ENCODE measurements at regions of chrX and their contacts with region 1.

Region 1: DNA sequence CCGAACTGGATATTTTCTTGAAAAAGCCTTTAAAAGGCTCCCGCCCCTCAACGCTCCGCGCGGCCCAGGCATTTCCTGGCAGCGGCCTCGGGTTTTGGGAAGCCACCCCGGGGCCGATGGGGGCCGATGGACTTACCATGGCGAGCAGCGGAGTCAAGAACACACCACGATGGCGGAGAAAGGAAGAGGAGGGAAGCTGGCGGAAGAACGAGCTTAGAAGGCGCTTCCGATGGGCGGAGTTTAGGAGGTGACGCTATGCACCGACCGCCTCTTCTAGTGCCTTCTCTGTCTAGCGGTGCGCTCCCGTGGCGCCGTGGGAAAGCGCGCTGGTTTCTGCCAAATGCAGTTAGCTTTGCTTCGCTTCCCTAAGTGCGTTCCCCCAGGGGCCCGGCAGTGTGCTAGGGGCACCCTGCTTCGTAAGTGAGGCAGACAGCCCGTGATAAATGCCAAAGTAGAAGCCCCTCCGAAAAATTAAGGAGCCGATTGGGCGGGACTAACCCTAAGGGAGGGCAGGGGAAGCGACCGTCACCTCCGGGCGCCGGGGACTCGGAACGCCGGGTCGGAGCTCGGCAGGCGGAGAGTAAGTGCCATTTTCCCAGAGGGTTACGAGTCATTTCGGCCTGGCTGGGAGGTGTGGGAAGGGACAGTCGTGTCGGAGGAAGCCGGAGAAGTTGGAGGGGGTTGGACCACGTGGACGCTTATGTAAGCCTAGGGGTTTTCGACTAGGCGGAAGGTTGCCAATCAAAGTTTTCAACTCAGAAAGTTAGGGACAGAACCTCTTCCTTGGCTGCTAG is at the start of gene RPL39:
- DNase-seq: peak; percentile 85
- H3K4me3 Mint-ChIP-seq: peak within 1 kb of the TSS; percentile 93
- H3K27ac Mint-ChIP-seq: peak within 1 kb of the TSS; percentile 92
- H3K4me1 Mint-ChIP-seq: peaks cover 28% of the 10 kb centered on the region
- H3K27me3 Mint-ChIP-seq: no peaks in the 10 kb centered on the region
- total RNA-seq, gene RPL39: 2,056 to 2,070 TPM

Region 2: DNA sequence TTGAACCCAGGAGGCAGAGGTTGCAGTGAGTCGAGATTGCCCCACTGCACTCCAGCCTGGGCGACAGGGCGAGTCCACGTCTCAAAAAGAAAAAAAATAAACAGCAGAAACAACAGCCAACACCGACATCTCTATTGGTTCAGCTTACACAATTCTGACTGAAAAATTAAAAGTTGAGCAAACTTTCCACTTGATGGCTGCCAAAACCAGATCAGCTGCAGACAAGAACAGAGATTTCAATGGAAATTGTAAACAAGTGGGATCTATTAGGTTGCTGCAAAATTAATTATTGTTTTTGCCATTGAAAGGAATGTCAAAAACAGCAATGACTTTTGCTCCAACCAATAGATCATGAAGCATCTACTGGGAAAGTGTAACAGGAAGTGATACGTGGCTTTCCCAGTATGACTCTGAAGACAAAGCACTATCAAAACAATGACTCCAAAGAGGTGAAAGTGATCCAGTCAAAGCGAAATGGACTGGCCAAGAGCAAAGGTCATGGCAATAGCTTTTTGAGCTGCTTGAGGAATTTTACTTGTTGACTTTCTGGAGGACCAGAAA is 34.8 kb after region 1 on chrX:
- CTCF ChIA-PET with region 1: interaction called, 9 read pairs
- POLR2A ChIA-PET with region 1: interaction called, 26 read pairs
- DNase-seq: no peak
- H3K4me3 Mint-ChIP-seq: no peak overlapping the region
- H3K27ac Mint-ChIP-seq: no peak overlapping the region
- H3K4me1 Mint-ChIP-seq: peaks cover 20% of the 10 kb centered on the region
- H3K27me3 Mint-ChIP-seq: no peaks in the 10 kb centered on the region

Region 3: DNA sequence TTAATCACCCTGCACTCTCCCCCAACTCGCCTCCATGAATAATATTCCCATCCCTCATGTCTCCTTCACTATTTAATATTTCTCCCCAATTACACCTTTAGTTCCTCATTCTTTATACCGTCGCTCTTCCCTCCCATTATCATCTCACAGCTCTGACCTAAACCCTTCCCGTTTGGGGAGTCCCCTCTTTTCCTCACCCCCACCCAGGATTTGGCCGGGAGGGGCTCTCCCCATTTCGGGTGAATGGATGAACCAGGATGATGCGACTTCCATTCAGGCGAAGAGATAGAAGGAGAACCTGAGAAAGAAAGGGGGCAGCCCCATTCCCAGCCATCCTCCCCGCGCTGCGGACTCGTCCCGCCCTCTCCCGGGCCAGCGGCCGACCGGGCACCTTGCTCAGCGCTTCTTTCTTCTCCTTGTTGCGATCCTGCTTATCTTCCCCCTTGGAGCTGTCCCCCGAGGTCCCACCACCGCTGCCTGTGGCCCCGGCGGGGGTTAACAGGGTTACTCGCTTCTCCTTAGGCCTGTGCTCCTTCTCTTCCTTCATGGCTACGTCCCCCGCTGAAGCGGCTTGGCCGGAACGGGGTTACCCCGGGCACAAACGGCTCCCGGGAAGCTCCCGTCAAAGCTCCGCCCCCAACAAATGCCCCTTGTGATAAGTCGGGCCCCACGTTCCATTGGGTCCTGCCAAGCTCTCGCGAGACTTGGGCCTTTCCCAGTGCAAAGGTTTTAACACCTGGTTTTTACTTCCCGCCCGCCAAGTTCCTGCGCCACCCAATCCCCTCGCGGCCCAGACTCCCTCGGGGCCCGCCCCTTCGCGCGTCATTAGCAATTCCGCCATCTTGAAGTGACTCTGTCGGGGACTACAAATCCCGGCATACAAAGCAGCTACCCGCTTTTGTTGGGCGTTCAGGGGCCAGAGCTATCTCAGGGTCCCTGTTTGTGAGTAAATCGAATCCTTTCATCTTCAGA is 61.0 kb after region 1 on chrX and contains the start of gene UPF3B:
- CTCF ChIA-PET with region 1: interaction called, 13 read pairs
- POLR2A ChIA-PET with region 1: interaction called, 32 read pairs
- DNase-seq: peak; percentile 95
- H3K4me3 Mint-ChIP-seq: peak within 1 kb of the TSS; percentile 99
- H3K27ac Mint-ChIP-seq: peak within 1 kb of the TSS; percentile 91
- H3K4me1 Mint-ChIP-seq: peaks cover 33% of the 10 kb centered on the region
- H3K27me3 Mint-ChIP-seq: peaks cover 5% of the 10 kb centered on the region
- total RNA-seq, gene UPF3B: 9.4 to 11.2 TPM

Region 4: GRCh38 chrX:119871599-119872395 is 80.2 kb after region 1 on chrX and contains the starts of genes NDUFA1 and RNF113A:
- CTCF ChIA-PET with region 1: interaction called, 14 read pairs
- POLR2A ChIA-PET with region 1: interaction called, 61 read pairs
- DNase-seq: peak; percentile 89
- H3K4me3 Mint-ChIP-seq: peak within 1 kb of the TSS; percentile 95
- H3K27ac Mint-ChIP-seq: peak within 1 kb of the TSS; percentile 99
- H3K4me1 Mint-ChIP-seq: peaks cover 21% of the 10 kb centered on the region
- H3K27me3 Mint-ChIP-seq: no peaks in the 10 kb centered on the region
- total RNA-seq, gene NDUFA1: 104 to 108 TPM
- total RNA-seq, gene RNF113A: 33.0 to 36.2 TPM

Region 5: DNA sequence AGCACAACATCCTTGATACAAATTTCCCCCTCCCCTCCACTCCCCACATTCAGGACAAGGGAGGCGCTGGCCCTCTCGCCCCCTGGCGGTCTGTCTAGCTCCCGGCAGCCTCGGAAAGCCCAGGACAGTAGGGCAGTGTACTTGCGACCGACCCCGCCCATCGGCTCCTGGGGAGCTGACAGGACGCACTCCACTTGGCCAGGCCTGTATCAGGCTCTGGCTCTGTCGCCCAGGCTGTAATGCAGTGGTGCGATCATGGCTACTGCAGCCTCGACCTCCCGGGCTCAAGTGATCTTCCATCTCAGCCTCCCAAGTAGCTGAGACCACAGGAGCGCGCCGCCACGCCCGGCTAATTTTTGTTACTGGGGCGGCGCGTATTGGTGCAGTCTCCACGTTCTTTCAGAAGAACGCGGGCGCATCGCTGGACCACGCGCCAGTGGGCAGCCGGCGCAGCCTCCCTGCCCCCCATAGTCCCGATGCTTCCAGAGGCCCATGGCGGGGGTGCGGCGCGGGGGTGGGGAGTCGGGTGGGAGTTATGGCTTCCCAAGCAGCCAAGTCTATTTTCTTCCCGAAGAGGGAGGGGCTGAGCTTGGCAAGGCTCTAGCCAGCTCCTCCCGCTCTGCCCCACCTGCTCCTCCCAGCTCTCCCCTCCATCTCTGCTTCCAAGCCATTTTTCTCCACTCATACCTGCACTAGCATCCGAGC is 96.2 kb after region 1 on chrX:
- CTCF ChIA-PET with region 1: interaction called, 11 read pairs
- POLR2A ChIA-PET with region 1: interaction called, 7 read pairs
- DNase-seq: peak; percentile 70
- H3K4me3 Mint-ChIP-seq: peak overlapping the region; percentile 35
- H3K27ac Mint-ChIP-seq: no peak overlapping the region
- H3K4me1 Mint-ChIP-seq: peaks cover 12% of the 10 kb centered on the region
- H3K27me3 Mint-ChIP-seq: no peaks in the 10 kb centered on the region

Region 6: DNA sequence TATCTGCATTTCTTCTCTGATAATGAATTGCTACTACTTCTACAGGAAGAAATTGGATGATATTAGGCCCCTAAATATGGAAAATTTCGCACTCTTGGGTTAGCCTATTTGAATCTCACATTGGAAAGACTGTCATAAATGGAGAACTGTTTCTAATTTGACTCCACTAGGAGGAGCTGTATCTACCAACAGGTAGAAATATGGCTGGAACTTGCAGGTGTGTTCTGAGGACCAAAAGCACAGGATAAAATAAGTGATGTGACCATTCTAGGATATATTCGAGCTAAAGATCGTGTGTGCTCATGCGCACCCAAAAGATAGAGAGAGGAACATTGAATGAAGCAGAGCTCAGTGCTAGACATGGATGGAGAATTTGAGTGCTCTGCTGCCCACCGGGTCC is 156.7 kb after region 1 on chrX:
- CTCF ChIA-PET with region 1: no interaction called
- POLR2A ChIA-PET with region 1: no interaction called
- DNase-seq: no peak
- H3K4me3 Mint-ChIP-seq: no peak overlapping the region
- H3K27ac Mint-ChIP-seq: no peak overlapping the region
- H3K4me1 Mint-ChIP-seq: peaks cover 8% of the 10 kb centered on the region
- H3K27me3 Mint-ChIP-seq: peaks cover 15% of the 10 kb centered on the region

Measured in activated CD4-positive, alpha-beta memory T cell treated with anti-CD3 and anti-CD28 coated beads, Interleukin-2, amount 10 ng/mL, durations not matched to agents 7 days and 5 days (primary cell).